Gastrocnemius medialis (tissue), 4 donors: ENCODE measurements at regions of chrX and their contacts with region 1.

Region 1: DNA sequence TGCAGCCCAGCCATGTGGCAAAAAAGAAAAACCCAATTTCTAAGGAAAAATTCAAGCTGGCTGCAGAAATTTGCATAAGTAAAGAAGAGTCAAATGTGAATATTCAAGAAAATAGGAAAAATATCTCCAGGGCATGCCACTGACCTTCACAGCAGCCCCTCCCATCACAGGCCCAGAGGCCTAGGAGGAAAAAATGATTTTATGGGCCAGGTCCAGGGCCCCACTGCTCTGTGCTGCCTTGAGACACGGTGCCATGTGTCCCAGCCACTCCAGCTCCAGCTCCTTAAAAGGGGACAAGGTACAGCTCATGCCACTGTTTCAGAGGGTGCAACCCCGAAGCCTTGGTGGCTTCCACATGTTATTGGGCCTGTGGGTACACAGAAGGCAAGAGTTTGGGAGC is 182.7 kb upstream of the FGF16 start:
- DNase-seq: no peak
- ATAC-seq: no peak
- H3K4me3 ChIP-seq: no peak overlapping the region
- H3K27ac ChIP-seq: no peak overlapping the region
- H3K4me1 ChIP-seq: no peaks in the 10 kb centered on the region
- H3K27me3 ChIP-seq: no peaks in the 10 kb centered on the region
- CTCF ChIP-seq: no peak
- POLR2A ChIP-seq: no peak

Region 2: GRCh38 chrX:76802708-76803107 is 461.8 kb before region 1 on chrX:
- in situ Hi-C with region 1: no loop called
- intact Hi-C with region 1: no loop called
- DNase-seq: no peak
- ATAC-seq: no peak
- H3K4me3 ChIP-seq: no peak overlapping the region
- H3K27ac ChIP-seq: no peak overlapping the region
- H3K4me1 ChIP-seq: no peaks in the 10 kb centered on the region
- H3K27me3 ChIP-seq: no peaks in the 10 kb centered on the region
- CTCF ChIP-seq: no peak
- POLR2A ChIP-seq: no peak

Region 3: GRCh38 chrX:77223046-77223445 is 41.4 kb before region 1 on chrX:
- in situ Hi-C with region 1: loop called in 1 of 4 experiments (anchors 10 kb)
- intact Hi-C with region 1: no loop called
- DNase-seq: no peak
- ATAC-seq: no peak
- H3K4me3 ChIP-seq: no peak overlapping the region
- H3K27ac ChIP-seq: no peak overlapping the region
- H3K4me1 ChIP-seq: no peaks in the 10 kb centered on the region
- H3K27me3 ChIP-seq: no peaks in the 10 kb centered on the region
- CTCF ChIP-seq: no peak
- POLR2A ChIP-seq: no peak

Region 4: GRCh38 chrX:77505227-77505626 is 240.7 kb after region 1 on chrX:
- in situ Hi-C with region 1: no loop called
- intact Hi-C with region 1: no loop called
- DNase-seq: no peak
- ATAC-seq: no peak
- H3K4me3 ChIP-seq: no peak overlapping the region
- H3K27ac ChIP-seq: no peak overlapping the region
- H3K4me1 ChIP-seq: no peaks in the 10 kb centered on the region
- H3K27me3 ChIP-seq: no peaks in the 10 kb centered on the region
- CTCF ChIP-seq: no peak
- POLR2A ChIP-seq: no peak